Dendritic cell treated with granulocyte-macrophage colony-stimulating factor and Interleukin-4, amounts not matched to agents 40 ng/mL and 50 ng/mL, for 4 days (primary cell): ENCODE measurements at regions of chr4 and their contacts with region 1.

Region 1: DNA sequence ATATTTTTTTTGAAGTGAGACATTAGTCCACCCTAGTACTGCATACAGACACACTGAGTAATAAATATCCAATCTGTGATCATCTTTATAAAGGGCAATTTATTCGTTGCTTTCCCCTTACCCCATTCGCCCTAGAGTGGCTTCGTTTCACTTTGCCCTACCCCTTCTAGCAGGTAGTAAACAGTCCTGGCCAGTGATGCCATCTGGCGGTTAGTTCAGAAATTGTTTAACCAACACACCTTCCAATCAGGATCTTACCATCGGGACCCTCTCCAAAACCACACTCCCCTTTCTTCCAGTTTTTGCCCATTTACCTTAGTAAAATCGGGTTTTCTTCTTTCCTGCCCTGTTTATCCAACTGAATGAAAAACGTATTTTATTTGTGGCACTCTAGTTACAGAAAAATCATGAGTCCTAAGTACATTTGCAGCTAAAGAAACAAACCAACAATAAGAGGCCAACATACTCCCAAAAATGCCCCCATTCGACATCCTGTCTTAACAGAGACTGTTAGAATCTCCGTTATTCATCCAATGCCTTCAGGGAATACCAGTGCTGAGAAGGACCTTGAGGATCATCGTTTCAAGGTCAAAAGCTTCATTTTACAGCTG is 2.2 kb downstream of the PPA2 start:
- H3K4me3 Mint-ChIP-seq: peak overlapping the region; percentile 59
- H3K27ac Mint-ChIP-seq: peak overlapping the region; percentile 99
- H3K4me1 Mint-ChIP-seq: peaks cover 42% of the 10 kb centered on the region
- H3K27me3 Mint-ChIP-seq: no peaks in the 10 kb centered on the region

Region 2: GRCh38 chr4:104930298-104930697 is 541.4 kb before region 1 on chr4:
- intact Hi-C with region 1: loop called (anchors 5 kb)
- H3K4me3 Mint-ChIP-seq: no peak overlapping the region
- H3K27ac Mint-ChIP-seq: peak overlapping the region; percentile 84
- H3K4me1 Mint-ChIP-seq: peaks cover 25% of the 10 kb centered on the region
- H3K27me3 Mint-ChIP-seq: no peaks in the 10 kb centered on the region

Region 3: GRCh38 chr4:105146276-105147015 is 325.2 kb before region 1 on chr4 and contains the start of gene TET2:
- intact Hi-C with region 1: loop called (anchors 2 kb)
- H3K4me3 Mint-ChIP-seq: peak within 1 kb of the TSS; percentile 89
- H3K27ac Mint-ChIP-seq: peak within 1 kb of the TSS; percentile 100
- H3K4me1 Mint-ChIP-seq: peaks cover 54% of the 10 kb centered on the region
- H3K27me3 Mint-ChIP-seq: no peaks in the 10 kb centered on the region

Region 4: GRCh38 chr4:105274504-105274903 is 197.2 kb before region 1 on chr4:
- intact Hi-C with region 1: loop called (anchors 5 kb)
- H3K4me3 Mint-ChIP-seq: no peak overlapping the region
- H3K27ac Mint-ChIP-seq: no peak overlapping the region
- H3K4me1 Mint-ChIP-seq: no peaks in the 10 kb centered on the region
- H3K27me3 Mint-ChIP-seq: no peaks in the 10 kb centered on the region

Region 5: DNA sequence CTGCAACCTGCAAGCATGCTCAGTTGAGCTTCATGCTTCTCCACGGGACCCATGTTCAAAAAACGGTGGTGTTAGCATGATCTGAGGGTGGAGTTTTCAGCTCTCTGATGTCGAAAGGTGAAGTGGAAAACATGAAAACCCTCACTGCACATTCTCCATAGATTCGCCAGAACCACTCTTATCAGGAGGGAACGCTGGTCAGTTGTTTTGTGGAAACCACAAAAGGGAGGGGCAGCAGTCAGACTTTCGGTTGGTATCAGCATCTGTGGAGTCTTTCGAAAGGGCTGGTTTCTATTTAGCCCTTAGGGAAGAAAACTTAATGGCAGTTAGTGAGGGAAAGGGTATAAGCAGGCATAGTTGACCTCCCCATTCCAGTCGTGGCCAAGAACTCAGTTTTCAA is 10.4 kb before region 1 on chr4:
- intact Hi-C with region 1: loop called (anchors 1 kb)
- H3K4me3 Mint-ChIP-seq: peak overlapping the region; percentile 30
- H3K27ac Mint-ChIP-seq: peak overlapping the region; percentile 79
- H3K4me1 Mint-ChIP-seq: peaks cover 49% of the 10 kb centered on the region
- H3K27me3 Mint-ChIP-seq: no peaks in the 10 kb centered on the region

Region 6: GRCh38 chr4:105520817-105521790 is 49.4 kb after region 1 on chr4:
- intact Hi-C with region 1: no loop called
- H3K4me3 Mint-ChIP-seq: no peak overlapping the region
- H3K27ac Mint-ChIP-seq: no peak overlapping the region
- H3K4me1 Mint-ChIP-seq: no peaks in the 10 kb centered on the region
- H3K27me3 Mint-ChIP-seq: no peaks in the 10 kb centered on the region